ENCODE measurements at regions of chr3 and their contacts with region 1.

Region 1: DNA sequence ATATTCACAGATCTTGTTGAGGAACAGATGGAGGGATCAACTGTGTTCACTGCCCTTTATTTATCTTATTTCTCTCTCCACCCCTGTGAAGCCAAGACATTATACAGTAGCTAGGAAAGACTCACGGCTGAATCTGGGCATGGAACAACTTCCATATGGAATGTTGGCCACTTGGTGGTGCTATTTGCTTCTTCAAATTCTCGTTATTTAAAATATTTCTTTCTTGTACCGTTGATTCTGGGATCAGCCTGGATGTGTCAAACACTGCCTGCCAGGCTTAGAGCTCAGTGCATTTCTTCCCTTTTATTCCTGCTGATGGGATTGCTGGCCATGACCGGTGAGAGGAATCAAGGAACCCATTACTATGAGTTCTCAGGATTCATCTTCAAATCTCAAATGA is 17.5 kb upstream of the GASK1A start:
- DNase-seq: peak; percentile 10
- ATAC-seq: peak; percentile 60; the same call in 1 of the 2 replicates
- H3K4me3 ChIP-seq: no peak overlapping the region
- H3K27ac ChIP-seq: no peak overlapping the region
- H3K4me1 ChIP-seq: no peaks in the 10 kb centered on the region
- H3K27me3 ChIP-seq: peaks cover 2% of the 10 kb centered on the region; the same call in 1 of the 2 replicates
- CTCF ChIP-seq: peak; percentile 68

Region 2: GRCh38 chr3:42430781-42431532 is 530.7 kb before region 1 on chr3:
- CTCF ChIA-PET with region 1: no interaction called
- POLR2A ChIA-PET with region 1: no interaction called
- in situ Hi-C with region 1: no loop called
- intact Hi-C with region 1: no loop called
- DNase-seq: no peak
- ATAC-seq: no peak
- H3K4me3 ChIP-seq: no peak overlapping the region
- H3K27ac ChIP-seq: no peak overlapping the region
- H3K4me1 ChIP-seq: no peaks in the 10 kb centered on the region
- H3K27me3 ChIP-seq: no peaks in the 10 kb centered on the region
- CTCF ChIP-seq: no peak

Region 3: DNA sequence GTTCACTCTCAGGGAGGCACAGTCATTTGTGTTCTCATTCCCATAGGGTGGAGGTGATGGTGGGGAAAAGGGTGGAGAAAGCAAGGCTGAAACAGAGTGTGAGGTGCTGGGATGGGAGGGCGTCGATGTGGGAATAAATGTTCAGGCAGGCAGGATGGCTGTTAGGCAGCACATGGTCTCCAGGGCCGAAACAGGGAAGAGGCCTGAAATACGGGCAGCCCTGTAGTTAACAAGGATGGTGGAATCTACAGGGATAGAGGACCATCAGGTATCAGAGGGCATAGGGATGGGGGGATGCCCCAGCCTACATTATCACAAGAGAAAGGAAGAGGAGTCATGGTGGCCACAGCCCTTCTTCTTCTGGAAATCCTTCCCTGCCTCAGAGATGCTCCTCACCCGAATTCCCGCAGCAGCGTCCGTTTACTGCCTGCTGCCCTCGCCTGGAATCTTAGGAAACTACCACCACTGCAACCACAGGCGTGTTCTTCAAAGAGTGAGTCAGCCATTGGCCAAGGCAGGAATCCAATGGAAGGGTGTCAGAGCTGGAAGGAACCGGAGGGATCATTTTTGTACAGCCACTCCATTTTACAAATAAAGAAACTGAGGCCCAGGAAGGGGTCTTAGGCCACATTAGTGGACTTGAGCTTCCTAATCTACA is 194.0 kb after region 1 on chr3:
- CTCF ChIA-PET with region 1: interaction called, 4 read pairs
- POLR2A ChIA-PET with region 1: no interaction called
- in situ Hi-C with region 1: no loop called
- intact Hi-C with region 1: loop called (anchors 5 kb)
- DNase-seq: no peak
- ATAC-seq: peak; percentile 83; the same call in 1 of the 2 replicates
- H3K4me3 ChIP-seq: no peak overlapping the region
- H3K27ac ChIP-seq: no peak overlapping the region
- H3K4me1 ChIP-seq: no peaks in the 10 kb centered on the region
- H3K27me3 ChIP-seq: peaks cover 5% of the 10 kb centered on the region; the same call in 1 of the 2 replicates
- CTCF ChIP-seq: peak; percentile 58